ENCODE measurements at regions of chr11 and their contacts with region 1.

Region 1: DNA sequence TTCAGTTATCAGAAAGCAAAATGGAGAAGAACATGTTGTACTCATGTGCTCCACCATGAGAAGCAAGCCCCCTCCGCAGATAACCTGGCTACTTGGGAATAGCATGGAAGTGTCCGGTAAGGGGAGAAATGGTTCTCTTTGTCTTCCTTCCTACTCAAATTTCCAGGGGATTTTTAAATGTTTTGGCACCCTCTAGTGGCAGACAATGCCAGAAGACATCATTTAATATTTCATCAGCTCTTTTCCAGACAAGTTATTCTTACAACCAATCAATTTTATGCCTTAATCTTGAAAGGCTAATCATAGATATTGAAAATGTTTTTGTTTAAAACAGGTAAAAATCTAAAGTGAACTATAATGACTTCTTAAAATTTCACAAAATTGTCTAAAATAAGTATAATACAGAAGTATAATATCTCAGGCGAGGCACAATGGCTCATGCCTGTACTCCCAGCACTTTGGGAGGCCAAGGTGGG is 15.7 kb downstream of the CRTAM start:
- DNase-seq: peak in 1 of 3 donors; percentile 83
- ATAC-seq: peak; percentile 57
- H3K4me3 ChIP-seq: no peak overlapping the region
- H3K4me1 ChIP-seq: no peaks in the 10 kb centered on the region
- CTCF ChIP-seq: peak; percentile 24

Region 2: GRCh38 chr11:122628810-122629555 is 225.0 kb before region 1 on chr11:
- intact Hi-C with region 1: loop called (anchors 10 kb)
- DNase-seq: peak in 2 of 3 donors; percentile 73 to 74
- ATAC-seq: peak; percentile 75
- H3K4me3 ChIP-seq: no peak overlapping the region
- H3K4me1 ChIP-seq: no peaks in the 10 kb centered on the region
- CTCF ChIP-seq: peak; percentile 71

Region 3: GRCh38 chr11:122796128-122796717 is 57.8 kb before region 1 on chr11:
- intact Hi-C with region 1: loop called in 1 of 2 experiments (anchors 10 kb)
- DNase-seq: peak in 2 of 3 donors; percentile 70 to 75
- ATAC-seq: peak; percentile 76
- H3K4me3 ChIP-seq: no peak overlapping the region
- H3K4me1 ChIP-seq: peaks cover 2% of the 10 kb centered on the region
- CTCF ChIP-seq: peak; percentile 46